ENCODE measurements at regions of chr7 and their contacts with region 1.

Region 1: GRCh38 chr7:22356701-22357353 is at the start of gene RAPGEF5:
- DNase-seq: peak; percentile 23
- ATAC-seq: peak; percentile 84
- H3K4me3 Mint-ChIP-seq: peak within 1 kb of the TSS; percentile 84
- H3K27ac Mint-ChIP-seq: no peak within 1 kb of the TSS
- H3K4me1 Mint-ChIP-seq: peaks cover 19% of the 10 kb centered on the region
- H3K27me3 Mint-ChIP-seq: peaks cover 23% of the 10 kb centered on the region
- CTCF ChIP-seq: no peak
- total RNA-seq, gene RAPGEF5: 10.1 and 12.4 TPM in 2 replicates

Region 2: GRCh38 chr7:22435105-22435504 is 78.3 kb after region 1 on chr7:
- CTCF ChIA-PET with region 1: no interaction called
- POLR2A ChIA-PET with region 1: no interaction called
- intact Hi-C with region 1: loop called (anchors 5 kb)
- DNase-seq: no peak
- ATAC-seq: no peak
- H3K4me3 Mint-ChIP-seq: peak overlapping the region; percentile 57
- H3K27ac Mint-ChIP-seq: no peak overlapping the region
- H3K4me1 Mint-ChIP-seq: peaks cover 39% of the 10 kb centered on the region
- H3K27me3 Mint-ChIP-seq: no peaks in the 10 kb centered on the region
- CTCF ChIP-seq: no peak

Region 3: DNA sequence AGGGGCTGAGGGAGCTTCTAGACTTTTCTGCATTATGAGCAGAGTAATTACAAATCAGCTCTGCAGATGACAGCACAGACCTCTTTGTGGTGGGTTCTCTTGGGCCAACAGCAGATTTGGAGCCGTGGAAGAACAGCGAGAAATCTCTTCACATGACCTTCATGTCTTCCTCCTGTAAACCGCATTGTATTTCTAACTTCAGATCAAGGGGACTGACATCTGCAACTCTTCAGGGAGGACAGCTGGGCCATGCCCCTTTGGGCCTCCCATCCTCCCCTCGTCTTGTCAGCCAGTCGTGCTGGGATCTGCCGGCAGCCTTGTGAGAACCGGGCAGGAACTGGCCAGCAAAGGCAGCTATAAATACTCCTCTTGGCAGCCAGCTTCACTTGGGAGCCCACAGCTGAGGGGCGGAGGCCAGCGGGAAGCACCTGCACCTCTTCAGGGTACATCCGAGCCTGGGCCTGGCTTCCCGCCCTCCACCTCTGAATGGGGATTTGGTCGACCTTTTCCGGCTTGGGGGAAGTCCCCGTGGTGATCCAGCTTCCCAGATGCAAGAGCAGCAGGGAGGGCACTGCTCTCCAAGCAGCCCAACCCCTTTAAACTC is 88.4 kb after region 1 on chr7:
- CTCF ChIA-PET with region 1: no interaction called
- POLR2A ChIA-PET with region 1: interaction called, 5 read pairs
- intact Hi-C with region 1: loop called (anchors 5 kb)
- DNase-seq: no peak
- ATAC-seq: peak; percentile 26
- H3K4me3 Mint-ChIP-seq: peak overlapping the region; percentile 60
- H3K27ac Mint-ChIP-seq: peak overlapping the region; percentile 87
- H3K4me1 Mint-ChIP-seq: peaks cover 69% of the 10 kb centered on the region
- H3K27me3 Mint-ChIP-seq: no peaks in the 10 kb centered on the region
- CTCF ChIP-seq: no peak